Esophagus muscularis mucosa (tissue), 4 donors: ENCODE measurements at regions of chr17 and their contacts with region 1.

Region 1: DNA sequence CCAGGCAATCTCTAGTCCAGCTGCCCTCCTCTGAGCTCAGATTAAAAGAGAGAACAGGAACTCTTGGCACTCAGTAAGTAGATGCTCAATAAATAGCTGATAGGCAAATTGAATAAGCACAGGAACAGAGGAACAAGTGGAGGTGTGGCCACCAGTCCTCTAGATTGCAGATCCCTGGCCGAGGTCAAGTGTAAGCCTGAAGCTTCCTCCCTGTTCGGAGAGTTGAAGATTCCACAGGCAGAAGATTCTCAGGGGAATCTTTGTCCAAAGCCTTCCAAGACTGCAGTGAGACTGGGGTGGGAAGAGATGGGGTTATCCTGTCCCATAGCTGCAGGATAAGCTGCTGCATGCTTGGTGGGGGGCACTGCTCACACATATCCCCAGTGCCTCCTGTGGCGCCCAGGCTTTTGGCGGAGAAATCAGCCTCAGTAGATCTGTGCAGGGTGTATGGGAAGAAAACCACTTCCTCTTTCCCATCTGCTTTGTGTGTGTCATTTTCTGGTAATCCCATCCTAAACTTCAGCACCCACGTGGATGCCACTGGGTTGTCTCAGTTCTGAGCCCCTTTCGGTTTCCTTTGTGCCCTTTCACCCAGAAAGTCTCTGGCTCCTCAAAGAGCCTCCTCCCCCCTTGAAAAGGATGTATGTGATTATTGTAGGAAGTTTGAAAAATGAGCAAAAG is 12.1 kb downstream of the CD300A start:
- DNase-seq: no peak
- H3K4me3 ChIP-seq: no peak overlapping the region
- H3K27ac ChIP-seq: no peak overlapping the region
- H3K4me1 ChIP-seq: no peaks in the 10 kb centered on the region
- H3K27me3 ChIP-seq: peaks cover 0 to 79% (median 1%) of the 10 kb centered on the region in 4 donors
- CTCF ChIP-seq: no peak
- EP300 ChIP-seq: no peak
- POLR2A ChIP-seq: no peak

Region 2: DNA sequence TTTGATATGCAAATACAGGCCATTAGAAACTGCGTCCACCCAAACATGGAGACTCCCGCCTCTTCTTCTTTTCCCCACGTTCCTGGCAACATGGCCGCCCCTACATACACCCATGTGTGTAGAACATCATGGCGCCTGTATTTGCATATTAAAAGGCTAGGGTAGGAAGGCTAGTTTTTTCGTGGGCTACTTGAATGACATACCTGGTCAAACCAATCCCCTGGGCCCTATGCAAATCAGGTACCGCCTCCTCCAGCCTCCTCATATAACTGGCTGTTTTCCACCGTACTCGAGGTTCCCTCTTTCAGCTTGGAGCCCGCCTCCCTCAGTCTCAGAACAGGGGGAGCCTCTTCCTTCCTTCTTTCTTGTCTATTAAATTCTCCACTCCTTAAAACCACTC is 53.6 kb after region 1 on chr17:
- intact Hi-C with region 1: loop called (anchors 10 kb)
- DNase-seq: no peak
- H3K4me3 ChIP-seq: peak overlapping the region in 2 of 4 donors; percentile 8 to 24
- H3K27ac ChIP-seq: no peak overlapping the region
- H3K4me1 ChIP-seq: no peaks in the 10 kb centered on the region
- H3K27me3 ChIP-seq: peaks cover 0 to 14% (median 0%) of the 10 kb centered on the region in 4 donors
- CTCF ChIP-seq: no peak
- EP300 ChIP-seq: no peak
- POLR2A ChIP-seq: no peak